Mammary epithelial cell (primary cell): ENCODE measurements at regions of chrX and their contacts with region 1.

Region 1: GRCh38 chrX:10189317-10190268 is 32.8 kb downstream of the CLCN4 start:
- DNase-seq: peak; percentile 51
- H3K4me3 ChIP-seq: no peak overlapping the region
- H3K27ac ChIP-seq: no peak overlapping the region
- H3K4me1 ChIP-seq: no peaks in the 10 kb centered on the region
- H3K27me3 ChIP-seq: no peaks in the 10 kb centered on the region
- CTCF ChIP-seq: peak; percentile 73 to 79

Region 2: GRCh38 chrX:10401239-10401638 is 211.6 kb after region 1 on chrX:
- CTCF ChIA-PET with region 1: no interaction called
- dilution Hi-C with region 1: no loop called
- in situ Hi-C with region 1: no loop called
- intact Hi-C with region 1: loop called (anchors 1 kb)
- DNase-seq: no peak
- H3K4me3 ChIP-seq: no peak overlapping the region
- H3K27ac ChIP-seq: no peak overlapping the region
- H3K4me1 ChIP-seq: no peaks in the 10 kb centered on the region
- H3K27me3 ChIP-seq: no peaks in the 10 kb centered on the region
- CTCF ChIP-seq: peak in 1 of 2 donors; percentile 20

Region 3: DNA sequence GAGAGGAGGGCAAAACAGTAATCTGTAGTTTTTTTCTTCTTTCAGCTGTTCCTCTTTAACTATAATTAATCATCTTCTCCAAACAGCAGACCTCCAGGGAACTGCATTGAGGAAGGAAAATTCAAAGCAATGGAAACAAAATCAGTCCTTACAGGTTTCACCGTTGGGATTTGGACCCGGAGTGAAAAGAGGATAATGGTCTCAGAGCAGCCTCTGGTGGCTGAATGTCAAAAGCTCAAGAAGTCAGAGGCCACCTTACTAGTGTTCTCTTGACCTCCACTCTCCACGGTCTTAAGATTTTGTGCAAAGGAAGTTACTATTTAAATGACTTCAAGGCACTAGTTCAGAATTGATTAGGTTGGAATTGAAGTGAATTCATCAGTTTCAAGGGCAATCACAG is 446.7 kb after region 1 on chrX:
- CTCF ChIA-PET with region 1: no interaction called
- dilution Hi-C with region 1: loop called (anchors 10 kb)
- in situ Hi-C with region 1: loop called in 1 of 2 experiments (anchors 25 kb)
- intact Hi-C with region 1: loop called (anchors 1 kb)
- DNase-seq: peak; percentile 46
- H3K4me3 ChIP-seq: no peak overlapping the region
- H3K27ac ChIP-seq: peak overlapping the region; percentile 98
- H3K4me1 ChIP-seq: peaks cover 19% of the 10 kb centered on the region
- H3K27me3 ChIP-seq: no peaks in the 10 kb centered on the region
- CTCF ChIP-seq: peak; percentile 64 to 73

Region 4: DNA sequence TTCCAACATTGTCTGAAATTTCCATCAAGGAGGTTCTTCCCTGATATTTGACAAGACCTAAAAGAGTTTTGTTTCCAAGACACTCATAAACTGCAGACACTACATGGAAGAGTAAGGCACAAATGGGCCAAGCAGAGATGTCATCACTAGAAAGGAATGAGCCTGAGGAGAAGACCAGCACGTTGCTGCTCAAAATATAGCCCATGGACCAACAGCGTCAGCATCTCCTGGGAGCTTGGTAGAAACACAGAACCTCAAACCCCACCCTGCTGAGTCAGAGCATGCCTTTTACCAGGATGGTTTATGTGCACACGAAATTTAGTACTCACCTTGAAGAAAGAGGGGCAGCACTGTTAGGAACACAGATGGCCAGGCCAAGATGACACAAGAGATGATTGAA is 559.5 kb after region 1 on chrX:
- CTCF ChIA-PET with region 1: no interaction called
- dilution Hi-C with region 1: loop called (anchors 10 kb)
- in situ Hi-C with region 1: no loop called
- intact Hi-C with region 1: no loop called
- DNase-seq: peak; percentile 76
- H3K4me3 ChIP-seq: no peak overlapping the region
- H3K27ac ChIP-seq: no peak overlapping the region
- H3K4me1 ChIP-seq: peaks cover 3% of the 10 kb centered on the region
- H3K27me3 ChIP-seq: no peaks in the 10 kb centered on the region
- CTCF ChIP-seq: no peak

Region 5: GRCh38 chrX:11111038-11111851 is 921.7 kb after region 1 on chrX and contains the start of gene HCCS:
- CTCF ChIA-PET with region 1: no interaction called
- dilution Hi-C with region 1: no loop called
- in situ Hi-C with region 1: loop called in 1 of 2 experiments (anchors 25 kb)
- intact Hi-C with region 1: no loop called
- DNase-seq: peak; percentile 80
- H3K4me3 ChIP-seq: peak within 1 kb of the TSS; percentile 75 to 82 (median 76)
- H3K27ac ChIP-seq: peak within 1 kb of the TSS; percentile 93
- H3K4me1 ChIP-seq: peaks cover 17% of the 10 kb centered on the region
- H3K27me3 ChIP-seq: no peaks in the 10 kb centered on the region
- CTCF ChIP-seq: no peak
- total RNA-seq, gene HCCS: 25.8 to 42.2 TPM

Region 6: GRCh38 chrX:11143931-11144678 is 954.5 kb after region 1 on chrX:
- CTCF ChIA-PET with region 1: no interaction called
- dilution Hi-C with region 1: loop called (anchors 25 kb)
- in situ Hi-C with region 1: no loop called
- intact Hi-C with region 1: no loop called
- DNase-seq: peak; percentile 69
- H3K4me3 ChIP-seq: no peak overlapping the region
- H3K27ac ChIP-seq: no peak overlapping the region
- H3K4me1 ChIP-seq: no peaks in the 10 kb centered on the region
- H3K27me3 ChIP-seq: no peaks in the 10 kb centered on the region
- CTCF ChIP-seq: peak; percentile 54 to 70